Activated CD8-positive, alpha-beta T cell treated with anti-CD3 and anti-CD28 coated beads, Interleukin-2, amount 10 ng/mL, durations not matched to agents 7 days and 5 days (primary cell): ENCODE measurements at regions of chr7 and their contacts with region 1.

Region 1: GRCh38 chr7:39453743-39454355 is 112.4 kb upstream of the YAE1 start:
- DNase-seq: peak; percentile 74
- ATAC-seq: peak; percentile 82
- H3K4me3 Mint-ChIP-seq: no peak overlapping the region
- H3K27ac Mint-ChIP-seq: no peak overlapping the region
- H3K4me1 Mint-ChIP-seq: no peaks in the 10 kb centered on the region
- H3K27me3 Mint-ChIP-seq: peaks cover 20% of the 10 kb centered on the region

Region 2: DNA sequence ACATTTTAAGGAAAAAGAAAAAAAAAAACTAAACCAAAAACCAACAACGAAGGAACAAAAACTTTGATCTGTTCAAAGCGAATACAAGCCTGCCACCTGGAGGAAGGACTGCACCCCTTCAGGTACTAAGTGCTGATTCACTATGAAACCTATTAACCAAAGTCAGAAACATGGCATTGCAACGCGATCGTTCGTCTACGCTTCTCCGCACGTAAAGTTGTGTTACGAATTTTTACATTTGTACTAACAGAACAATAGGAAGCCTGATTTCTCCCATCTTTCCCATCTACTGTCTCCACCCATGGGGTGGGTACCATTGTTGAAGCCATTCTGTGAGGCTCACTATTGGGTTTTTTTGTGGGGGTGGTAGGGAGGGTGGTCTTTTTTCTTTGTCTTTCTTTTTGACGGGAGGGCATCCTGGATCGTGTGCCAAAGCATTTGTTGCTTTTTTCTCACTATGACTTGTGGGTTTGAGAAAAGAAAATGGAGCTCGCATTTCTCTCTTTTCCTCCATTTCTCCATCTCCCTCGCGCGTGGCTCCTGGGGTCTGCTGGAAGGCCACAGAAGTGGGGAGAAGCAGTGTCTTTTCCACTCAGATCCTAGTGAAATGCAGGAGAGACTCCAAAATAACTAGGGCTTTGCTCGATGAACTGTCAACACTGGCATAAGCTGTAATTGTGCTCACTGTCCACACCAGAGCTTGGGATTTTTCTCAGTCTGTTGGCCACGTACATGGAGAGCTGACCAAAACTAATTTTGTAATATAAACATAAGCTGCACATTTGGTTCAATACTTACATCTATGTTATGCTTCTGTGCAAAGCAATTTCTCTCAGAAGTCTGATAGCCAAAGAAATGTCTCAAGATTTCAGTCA is 11.4 kb after region 1 on chr7:
- CTCF ChIA-PET with region 1: interaction called, 25 read pairs
- POLR2A ChIA-PET with region 1: no interaction called
- DNase-seq: peak; percentile 55
- ATAC-seq: peak; percentile 73
- H3K4me3 Mint-ChIP-seq: no peak overlapping the region
- H3K27ac Mint-ChIP-seq: no peak overlapping the region
- H3K4me1 Mint-ChIP-seq: peaks cover 7% of the 10 kb centered on the region
- H3K27me3 Mint-ChIP-seq: peaks cover 24% of the 10 kb centered on the region

Region 3: GRCh38 chr7:39525926-39526325 is 72.1 kb after region 1 on chr7:
- CTCF ChIA-PET with region 1: interaction called, 10 read pairs
- POLR2A ChIA-PET with region 1: no interaction called
- DNase-seq: no peak
- ATAC-seq: no peak
- H3K4me3 Mint-ChIP-seq: no peak overlapping the region
- H3K27ac Mint-ChIP-seq: no peak overlapping the region
- H3K4me1 Mint-ChIP-seq: no peaks in the 10 kb centered on the region
- H3K27me3 Mint-ChIP-seq: peaks cover 19% of the 10 kb centered on the region